AG04450 (cell line): ENCODE measurements at regions of chr12 and their contacts with region 1.

Region 1: DNA sequence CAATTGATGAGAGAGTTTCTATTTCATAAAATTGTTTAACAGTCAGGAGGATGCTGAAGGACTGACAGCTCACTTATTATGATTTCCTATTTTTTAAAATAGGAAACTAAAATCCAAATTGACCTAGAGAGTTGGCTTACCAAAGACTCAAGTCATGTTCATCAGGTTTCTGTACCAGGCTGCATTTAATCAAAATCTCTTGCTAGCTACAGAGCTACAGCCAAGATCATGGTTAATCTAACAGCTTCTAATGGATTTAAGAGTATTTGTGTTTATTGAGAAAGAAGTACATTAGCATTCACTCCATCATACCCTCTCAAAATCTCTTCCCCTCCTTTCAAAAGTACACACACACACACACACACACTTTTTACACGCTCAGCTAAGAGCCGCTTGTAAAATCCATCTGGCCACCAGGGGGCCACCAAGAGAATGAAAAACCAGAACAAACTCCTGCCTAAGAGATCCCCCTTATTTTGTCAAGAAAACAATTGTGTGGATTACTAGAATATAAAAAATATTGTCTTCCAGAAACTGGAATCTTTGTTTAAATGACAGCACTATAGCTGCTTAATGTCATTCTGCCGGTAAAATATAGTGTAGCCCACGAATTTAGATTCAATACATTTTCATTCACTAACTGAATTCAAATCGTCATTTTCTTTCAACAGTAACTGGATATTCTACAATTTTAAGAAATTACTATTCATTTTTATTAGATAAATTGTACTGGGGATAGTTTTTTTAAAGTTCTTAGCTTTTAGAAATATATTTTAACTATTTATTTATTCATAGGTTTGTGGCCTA is 334.0 kb downstream of the BTG1 start:
- DNase-seq: peak; percentile 21
- H3K4me3 ChIP-seq: no peak overlapping the region
- H3K27ac ChIP-seq: no peak overlapping the region
- H3K27me3 ChIP-seq: no peaks in the 10 kb centered on the region
- CTCF ChIP-seq: peak; percentile 88

Region 2: DNA sequence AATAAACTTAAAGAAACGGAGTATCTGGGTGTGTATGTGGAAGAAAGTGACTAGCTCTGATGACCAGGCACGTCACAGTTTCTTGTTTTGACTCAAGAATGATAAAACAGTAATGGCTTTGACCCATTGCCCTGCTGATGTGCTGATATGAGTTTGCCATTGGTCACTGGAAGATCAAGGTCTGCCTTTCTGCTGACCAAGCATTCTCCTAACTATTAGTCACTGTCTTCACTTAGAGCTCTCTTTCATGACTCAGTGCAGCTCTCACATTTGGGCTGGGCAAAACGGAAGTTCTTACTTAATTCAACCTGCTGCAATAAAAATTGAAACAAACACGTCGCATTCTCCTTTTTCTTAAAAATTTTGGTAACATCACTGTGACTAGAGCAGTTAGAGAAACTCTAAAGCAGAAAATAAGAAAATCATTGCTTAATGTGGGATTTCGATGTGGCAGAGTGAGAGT is 32.7 kb before region 1 on chr12:
- CTCF ChIA-PET with region 1: interaction called, 25 read pairs
- POLR2A ChIA-PET with region 1: no interaction called
- DNase-seq: peak; percentile 33
- H3K4me3 ChIP-seq: no peak overlapping the region
- H3K27ac ChIP-seq: no peak overlapping the region
- H3K27me3 ChIP-seq: no peaks in the 10 kb centered on the region
- CTCF ChIP-seq: no peak

Region 3: DNA sequence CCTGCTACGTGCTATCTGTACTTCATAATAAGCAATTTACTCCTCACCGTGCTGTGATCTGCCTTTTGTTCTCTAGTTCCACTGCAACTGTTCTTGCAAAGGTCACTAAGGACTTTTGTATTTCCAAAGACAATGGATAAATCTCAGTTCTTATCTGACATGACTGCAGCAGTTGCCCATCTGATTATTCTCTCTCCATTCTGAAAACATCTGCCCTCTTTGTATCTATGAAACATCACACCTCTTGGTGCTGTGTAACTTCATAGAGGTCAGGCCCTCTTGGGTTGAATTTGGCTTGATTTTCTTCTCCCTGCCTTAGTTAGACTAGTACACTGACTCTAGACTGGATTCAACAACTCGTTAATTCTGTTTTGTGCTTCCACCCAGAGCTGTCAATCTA is 14.3 kb after region 1 on chr12:
- CTCF ChIA-PET with region 1: interaction called, 28 read pairs
- POLR2A ChIA-PET with region 1: no interaction called
- DNase-seq: no peak
- H3K4me3 ChIP-seq: no peak overlapping the region
- H3K27ac ChIP-seq: no peak overlapping the region
- H3K27me3 ChIP-seq: no peaks in the 10 kb centered on the region
- CTCF ChIP-seq: no peak

Region 4: GRCh38 chr12:91841822-91842221 is 30.1 kb after region 1 on chr12:
- CTCF ChIA-PET with region 1: interaction called, 17 read pairs
- POLR2A ChIA-PET with region 1: no interaction called
- DNase-seq: no peak
- H3K4me3 ChIP-seq: no peak overlapping the region
- H3K27ac ChIP-seq: no peak overlapping the region
- H3K27me3 ChIP-seq: no peaks in the 10 kb centered on the region
- CTCF ChIP-seq: no peak

Region 5: GRCh38 chr12:92136965-92137721 is 325.5 kb after region 1 on chr12:
- CTCF ChIA-PET with region 1: interaction called, 55 read pairs
- POLR2A ChIA-PET with region 1: no interaction called
- DNase-seq: peak; percentile 82
- H3K4me3 ChIP-seq: peak overlapping the region; percentile 29
- H3K27ac ChIP-seq: peak overlapping the region; percentile 48
- H3K27me3 ChIP-seq: no peaks in the 10 kb centered on the region
- CTCF ChIP-seq: no peak